GM12878 (cell line): ENCODE measurements at regions of chr1 and their contacts with region 1.

Region 1: GRCh38 chr1:41728403-41729202 is 190.1 kb downstream of the HIVEP3 start:
- DNase-seq: peak; percentile 100
- ATAC-seq: peak; percentile 87
- H3K4me3 ChIP-seq: no peak overlapping the region
- H3K27ac ChIP-seq: peak overlapping the region; percentile 93
- H3K4me1 ChIP-seq: peaks cover 56% of the 10 kb centered on the region
- H3K27me3 ChIP-seq: no peaks in the 10 kb centered on the region
- CTCF ChIP-seq: no peak
- EP300 ChIP-seq: peak; percentile 97
- POLR2A ChIP-seq: no peak
- RAD21 ChIP-seq: peak; percentile 23; the same call in 1 of the 2 replicates

Region 2: DNA sequence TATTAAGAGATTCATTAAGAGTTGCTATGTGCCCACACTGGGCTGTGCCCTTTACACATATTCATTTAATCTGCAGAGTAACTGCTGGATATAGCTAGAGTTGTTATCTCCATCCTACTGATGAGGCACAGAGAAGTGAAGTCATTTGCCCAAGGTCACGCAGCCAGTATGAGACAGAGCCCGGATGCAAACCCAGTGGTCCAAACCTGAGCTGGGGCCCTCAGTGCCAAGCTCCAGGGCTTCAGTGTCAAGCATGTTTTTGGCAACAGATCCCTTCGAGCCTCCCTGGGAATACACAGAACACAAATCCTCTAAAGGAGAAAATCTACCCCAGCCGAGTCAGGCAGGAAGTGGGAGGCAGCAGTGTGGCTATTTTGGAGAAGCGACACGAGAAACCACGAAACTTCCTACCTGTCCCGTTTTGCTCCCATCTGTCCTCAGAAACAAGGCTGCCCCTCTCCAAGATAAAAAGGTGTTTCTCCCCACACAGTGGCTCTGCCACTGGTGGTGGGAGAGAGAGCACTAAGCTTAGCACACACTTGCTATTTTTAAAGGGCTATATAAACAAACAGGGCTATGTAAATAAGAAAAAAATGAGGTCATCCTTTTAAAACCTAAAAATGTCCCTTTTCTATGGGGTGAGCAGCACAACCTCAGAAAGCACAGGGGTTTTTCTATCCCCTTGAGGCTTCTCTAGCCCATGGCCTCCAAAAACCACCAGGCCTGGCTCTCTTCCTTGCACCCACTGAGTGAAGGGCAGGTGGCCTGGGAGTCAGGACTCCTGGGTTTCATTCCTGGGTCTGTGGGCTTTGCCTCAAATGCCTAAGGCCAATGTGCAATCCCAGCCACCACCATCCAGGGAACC is 105.5 kb before region 1 on chr1:
- CTCF ChIA-PET with region 1: interaction called, 3 read pairs
- POLR2A ChIA-PET with region 1: interaction called, 3 read pairs
- RAD21 ChIA-PET with region 1: interaction called, 29 read pairs
- SMC1A ChIA-PET with region 1: interaction called, 5 read pairs
- in situ Hi-C with region 1: no loop called
- intact Hi-C with region 1: no loop called
- DNase-seq: peak; percentile 70
- ATAC-seq: peak; percentile 88
- H3K4me3 ChIP-seq: peak overlapping the region; percentile 48
- H3K27ac ChIP-seq: peak overlapping the region; percentile 74
- H3K4me1 ChIP-seq: peaks cover 29% of the 10 kb centered on the region
- H3K27me3 ChIP-seq: no peaks in the 10 kb centered on the region
- CTCF ChIP-seq: no peak
- EP300 ChIP-seq: peak; percentile 55 to 76; a peak in 2 of 4 replicates
- POLR2A ChIP-seq: no peak
- RAD21 ChIP-seq: peak; percentile 13; the same call in 1 of the 2 replicates

Region 3: GRCh38 chr1:41678111-41678878 is 50.3 kb before region 1 on chr1:
- CTCF ChIA-PET with region 1: interaction called, 17 read pairs
- POLR2A ChIA-PET with region 1: interaction called, 6 read pairs
- RAD21 ChIA-PET with region 1: interaction called, 20 read pairs
- SMC1A ChIA-PET with region 1: interaction called, 30 read pairs
- in situ Hi-C with region 1: no loop called
- intact Hi-C with region 1: no loop called
- DNase-seq: no peak
- ATAC-seq: peak; percentile 82
- H3K4me3 ChIP-seq: no peak overlapping the region
- H3K27ac ChIP-seq: peak overlapping the region; percentile 40; the same call in 1 of the 2 replicates
- H3K4me1 ChIP-seq: peaks cover 43% of the 10 kb centered on the region
- H3K27me3 ChIP-seq: no peaks in the 10 kb centered on the region
- CTCF ChIP-seq: no peak
- EP300 ChIP-seq: no peak
- POLR2A ChIP-seq: 0 out of 2 replicates have a peak, but pooled peaks have one; percentile 24
- RAD21 ChIP-seq: no peak

Region 4: DNA sequence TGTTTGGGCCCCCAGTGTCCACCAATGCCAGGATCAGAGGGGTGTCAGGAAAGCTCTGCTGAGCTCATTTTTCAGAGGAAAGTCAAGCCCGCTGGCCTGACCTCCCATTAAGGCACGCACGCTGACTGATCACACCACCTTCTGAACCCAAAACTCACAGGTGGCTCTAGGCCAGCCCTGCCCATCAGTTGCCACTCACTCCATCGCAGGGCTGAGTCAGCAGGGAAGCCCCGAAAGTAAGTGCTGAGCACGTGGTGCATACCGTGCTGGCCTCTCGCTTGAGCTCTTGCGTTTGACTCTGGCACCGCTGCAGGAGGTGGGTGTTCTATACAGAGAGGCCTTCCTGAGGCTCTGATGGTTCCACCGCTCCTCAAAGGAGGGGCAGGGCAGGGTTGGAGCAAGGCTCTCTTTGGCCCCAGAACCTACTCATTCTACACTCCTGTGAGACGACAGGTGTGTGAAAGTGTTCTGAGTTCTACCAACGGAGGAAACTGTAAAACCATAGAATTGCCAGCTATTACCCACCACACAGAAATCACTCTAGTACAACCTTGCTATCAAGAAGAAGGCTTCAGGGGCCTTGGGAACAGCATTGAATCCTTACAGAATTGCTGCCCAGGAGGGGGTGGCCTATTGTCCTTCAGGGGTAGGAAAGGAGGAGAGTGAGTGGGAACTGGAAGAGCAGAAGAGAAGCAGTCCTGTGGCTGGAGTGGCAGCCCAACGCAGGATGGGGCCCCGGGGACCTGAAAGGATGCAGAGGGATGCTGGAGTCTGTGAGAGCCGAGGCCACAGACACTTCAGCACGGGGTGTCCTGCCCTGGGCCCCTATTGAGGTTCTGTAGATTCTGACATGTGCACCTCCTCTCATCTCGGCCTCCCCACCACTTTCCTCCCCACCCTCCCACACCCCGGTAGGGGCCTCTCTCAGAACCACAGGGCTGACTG is 29.4 kb before region 1 on chr1:
- CTCF ChIA-PET with region 1: interaction called, 7 read pairs
- POLR2A ChIA-PET with region 1: interaction called, 10 read pairs
- RAD21 ChIA-PET with region 1: interaction called, 33 read pairs
- SMC1A ChIA-PET with region 1: interaction called, 18 read pairs
- in situ Hi-C with region 1: no loop called
- intact Hi-C with region 1: loop called (anchors 2 kb)
- DNase-seq: peak; percentile 86
- ATAC-seq: peak; percentile 96
- H3K4me3 ChIP-seq: no peak overlapping the region
- H3K27ac ChIP-seq: peak overlapping the region; percentile 9; the same call in 1 of the 2 replicates
- H3K4me1 ChIP-seq: peaks cover 35% of the 10 kb centered on the region
- H3K27me3 ChIP-seq: no peaks in the 10 kb centered on the region
- CTCF ChIP-seq: no peak
- EP300 ChIP-seq: peak in 1 of 2 experiments; percentile 47; a peak in 1 of 4 replicates
- POLR2A ChIP-seq: no peak; the same call in 1 of the 2 replicates
- RAD21 ChIP-seq: peak; percentile 37

Region 5: GRCh38 chr1:41802532-41803501 is 74.2 kb after region 1 on chr1:
- CTCF ChIA-PET with region 1: interaction called, 18 read pairs
- POLR2A ChIA-PET with region 1: interaction called, 5 read pairs
- RAD21 ChIA-PET with region 1: interaction called, 61 read pairs
- SMC1A ChIA-PET with region 1: interaction called, 19 read pairs
- in situ Hi-C with region 1: no loop called
- intact Hi-C with region 1: loop called (anchors 2 kb)
- DNase-seq: peak; percentile 85
- ATAC-seq: peak; percentile 50
- H3K4me3 ChIP-seq: no peak overlapping the region
- H3K27ac ChIP-seq: peak overlapping the region; percentile 74
- H3K4me1 ChIP-seq: peaks cover 86% of the 10 kb centered on the region
- H3K27me3 ChIP-seq: no peaks in the 10 kb centered on the region
- CTCF ChIP-seq: no peak
- EP300 ChIP-seq: peak in 1 of 2 experiments; percentile 44; a peak in 2 of 4 replicates
- POLR2A ChIP-seq: no peak
- RAD21 ChIP-seq: no peak

Region 6: GRCh38 chr1:41891199-41891896 is 162.7 kb after region 1 on chr1:
- CTCF ChIA-PET with region 1: no interaction called
- POLR2A ChIA-PET with region 1: no interaction called
- RAD21 ChIA-PET with region 1: no interaction called
- SMC1A ChIA-PET with region 1: no interaction called
- in situ Hi-C with region 1: no loop called
- intact Hi-C with region 1: loop called (anchors 1 kb)
- DNase-seq: peak; percentile 68
- ATAC-seq: peak; percentile 98
- H3K4me3 ChIP-seq: peak overlapping the region; percentile 66
- H3K27ac ChIP-seq: peak overlapping the region; percentile 75
- H3K4me1 ChIP-seq: peaks cover 15% of the 10 kb centered on the region
- H3K27me3 ChIP-seq: no peaks in the 10 kb centered on the region
- CTCF ChIP-seq: peak; percentile 39 to 42 (median 41); a peak in 5 of 6 replicates
- EP300 ChIP-seq: peak; percentile 4 to 26; a peak in 1 of 4 replicates
- POLR2A ChIP-seq: peak; percentile 73
- RAD21 ChIP-seq: peak; percentile 72